ENCODE measurements at regions of chr18 and their contacts with region 1.

Region 1: DNA sequence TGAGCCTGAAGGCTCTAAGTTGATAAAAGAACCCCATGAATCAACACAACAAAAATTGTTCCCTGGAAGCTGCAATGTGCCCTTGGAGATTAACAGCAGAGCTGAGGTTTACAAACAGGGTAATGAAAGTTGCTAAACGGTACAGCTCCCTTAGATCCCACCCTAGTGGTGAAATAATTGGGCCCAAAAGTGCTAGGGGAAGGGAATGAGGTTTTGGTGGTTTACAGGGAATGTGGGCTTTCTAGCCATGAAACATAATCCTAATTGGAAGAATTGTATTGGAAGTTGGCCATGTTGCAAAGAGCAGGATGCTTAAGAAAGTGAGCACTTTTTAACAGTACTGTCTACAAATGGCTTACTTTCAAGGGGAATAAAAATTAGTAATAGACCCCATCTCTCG is 180.2 kb upstream of the SMIM21 start:
- DNase-seq: no peak
- H3K4me3 ChIP-seq: no peak overlapping the region
- H3K27ac ChIP-seq: no peak overlapping the region
- H3K4me1 ChIP-seq: no peaks in the 10 kb centered on the region
- H3K27me3 ChIP-seq: no peaks in the 10 kb centered on the region
- CTCF ChIP-seq: no peak

Region 2: GRCh38 chr18:75429975-75430374 is 177.7 kb before region 1 on chr18:
- intact Hi-C with region 1: no loop called
- DNase-seq: no peak
- H3K4me3 ChIP-seq: no peak overlapping the region
- H3K27ac ChIP-seq: no peak overlapping the region
- H3K4me1 ChIP-seq: no peaks in the 10 kb centered on the region
- H3K27me3 ChIP-seq: no peaks in the 10 kb centered on the region
- CTCF ChIP-seq: no peak

Region 3: GRCh38 chr18:75659535-75660023 is 51.9 kb after region 1 on chr18:
- intact Hi-C with region 1: loop called (anchors 10 kb)
- DNase-seq: no peak
- H3K4me3 ChIP-seq: no peak overlapping the region
- H3K27ac ChIP-seq: no peak overlapping the region
- H3K4me1 ChIP-seq: no peaks in the 10 kb centered on the region
- H3K27me3 ChIP-seq: no peaks in the 10 kb centered on the region
- CTCF ChIP-seq: no peak

Region 4: DNA sequence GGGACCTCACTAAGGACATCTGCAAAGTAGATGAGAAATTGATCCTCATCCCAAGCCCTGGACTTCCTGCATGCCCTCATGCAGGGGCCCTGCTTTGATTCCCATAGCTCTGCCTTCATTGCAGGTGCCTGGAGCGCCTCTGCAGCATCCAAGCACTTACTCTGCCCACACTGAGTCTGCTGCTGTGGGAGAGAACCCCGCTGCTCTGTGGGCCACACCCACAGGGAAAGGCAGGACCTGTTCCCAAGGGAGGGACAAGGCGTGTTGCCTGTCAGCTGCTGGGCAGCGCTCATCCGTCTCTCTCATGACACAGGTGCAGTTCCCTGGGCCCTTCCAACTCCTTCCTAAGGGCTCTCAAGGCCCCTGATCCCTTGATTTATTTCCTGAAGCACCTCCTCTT is 86.6 kb after region 1 on chr18:
- intact Hi-C with region 1: no loop called
- DNase-seq: no peak
- H3K4me3 ChIP-seq: no peak overlapping the region
- H3K27ac ChIP-seq: no peak overlapping the region
- H3K4me1 ChIP-seq: no peaks in the 10 kb centered on the region
- H3K27me3 ChIP-seq: no peaks in the 10 kb centered on the region
- CTCF ChIP-seq: no peak

Region 5: GRCh38 chr18:75844146-75844545 is 236.4 kb after region 1 on chr18:
- intact Hi-C with region 1: no loop called
- DNase-seq: no peak
- H3K4me3 ChIP-seq: no peak overlapping the region
- H3K27ac ChIP-seq: no peak overlapping the region
- H3K4me1 ChIP-seq: no peaks in the 10 kb centered on the region
- H3K27me3 ChIP-seq: no peaks in the 10 kb centered on the region
- CTCF ChIP-seq: no peak

Measured in colonic mucosa (tissue), 4 donors.